Pancreas (tissue), 10 donors: ENCODE measurements at regions of chr22 and their contacts with region 1.

Region 1: GRCh38 chr22:40645579-40646197 is 9.2 kb upstream of the MRTFA start:
- DNase-seq: no peak
- ATAC-seq: peak in 1 of 4 donors; percentile 2
- H3K4me3 ChIP-seq: no peak overlapping the region
- H3K27ac ChIP-seq: no peak overlapping the region
- H3K4me1 ChIP-seq: peaks cover 0 to 6% (median 0%) of the 10 kb centered on the region in 3 donors
- H3K27me3 ChIP-seq: no peaks in the 10 kb centered on the region
- CTCF ChIP-seq: no peak

Region 2: DNA sequence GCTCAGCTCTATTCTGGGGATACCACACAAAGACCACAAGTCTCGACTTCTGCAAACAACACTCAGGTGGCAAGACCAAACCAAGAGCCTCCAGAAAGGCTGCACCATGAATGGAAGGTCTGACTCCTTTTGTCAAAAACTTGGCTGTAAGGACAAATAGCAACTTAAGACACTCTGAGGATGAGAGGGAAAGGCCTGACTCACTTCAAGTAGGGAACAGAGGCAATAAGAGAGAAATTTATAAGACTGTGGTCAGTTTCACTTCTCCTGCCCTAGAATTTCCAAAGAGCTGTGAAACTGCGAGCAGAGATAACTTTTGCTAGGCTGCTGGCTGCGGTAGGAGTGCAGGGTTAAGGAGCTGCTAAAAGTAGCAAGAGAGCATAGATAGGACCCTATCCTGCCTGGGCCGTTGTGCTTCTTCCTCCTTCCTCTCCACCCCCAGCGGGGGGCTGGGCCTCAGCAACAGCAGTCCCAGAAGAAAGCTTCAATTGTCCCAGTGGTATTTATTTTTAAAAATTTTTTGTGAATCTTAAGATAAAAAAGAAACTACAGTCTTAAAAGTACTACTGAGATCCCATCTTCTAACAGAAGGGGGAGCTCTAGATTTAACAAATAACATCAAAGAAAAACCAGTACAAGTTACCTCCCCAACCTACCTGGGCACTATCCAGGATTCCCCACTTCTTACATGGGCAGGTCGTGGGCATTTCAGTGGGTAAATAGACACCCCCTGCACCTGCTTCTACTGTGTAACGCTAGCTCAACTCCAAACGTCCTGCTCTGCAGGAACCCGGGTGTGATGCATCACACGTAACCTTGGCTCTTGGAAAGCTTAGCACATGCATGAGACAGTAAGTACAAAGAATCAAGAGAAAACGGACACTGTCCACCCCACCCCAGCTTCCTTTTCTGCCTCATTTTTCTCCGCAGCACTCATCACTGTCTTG is 208.9 kb before region 1 on chr22:
- intact Hi-C with region 1: loop called in 2 of 3 experiments (anchors 2 to 5 kb)
- DNase-seq: no peak
- ATAC-seq: peak; percentile 61 to 84 (median 80)
- H3K4me3 ChIP-seq: no peak overlapping the region
- H3K27ac ChIP-seq: peak overlapping the region in 2 of 4 donors; percentile 8 to 20
- H3K4me1 ChIP-seq: peaks cover 0 to 3% (median 0%) of the 10 kb centered on the region in 3 donors
- H3K27me3 ChIP-seq: no peaks in the 10 kb centered on the region
- CTCF ChIP-seq: peak; percentile 16 to 56 (median 48)

Region 3: GRCh38 chr22:40525249-40525884 is 120.3 kb before region 1 on chr22:
- intact Hi-C with region 1: loop called in 2 of 3 experiments (anchors 5 to 10 kb)
- DNase-seq: peak in 5 of 6 donors; percentile 20 to 69 (median 39)
- ATAC-seq: peak; percentile 62 to 76 (median 74)
- H3K4me3 ChIP-seq: no peak overlapping the region
- H3K27ac ChIP-seq: no peak overlapping the region
- H3K4me1 ChIP-seq: peaks cover 5 to 14% (median 6%) of the 10 kb centered on the region in 3 donors
- H3K27me3 ChIP-seq: no peaks in the 10 kb centered on the region
- CTCF ChIP-seq: peak; percentile 40 to 61 (median 51)